Activated CD8-positive, alpha-beta T cell treated with anti-CD3 and anti-CD28 coated beads for 36 hours (primary cell): ENCODE measurements at regions of chr4 and their contacts with region 1.

Region 1: DNA sequence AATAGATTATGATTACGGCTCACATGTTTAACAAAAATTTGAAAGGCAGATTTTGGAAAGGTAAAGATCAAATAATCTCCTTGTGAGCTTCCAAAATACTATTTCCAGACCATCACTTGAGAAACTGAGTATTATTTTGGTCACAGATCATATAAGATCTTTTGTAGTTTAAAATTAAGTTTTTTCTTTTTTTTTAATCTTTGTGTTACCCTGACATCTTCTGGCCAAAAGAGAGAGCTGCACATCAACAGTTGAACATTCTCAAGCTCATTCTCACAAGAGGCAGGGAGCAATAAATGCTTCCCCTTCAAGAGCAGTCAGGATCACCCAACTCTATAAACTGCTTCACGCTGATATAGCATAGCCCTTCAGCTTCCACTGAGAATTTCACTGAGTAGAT is 15.9 kb downstream of the TMEM192 start:
- DNase-seq: no peak
- ATAC-seq: no peak
- H3K4me3 Mint-ChIP-seq: no peak overlapping the region
- H3K27ac Mint-ChIP-seq: no peak overlapping the region
- H3K4me1 Mint-ChIP-seq: no peaks in the 10 kb centered on the region
- H3K27me3 Mint-ChIP-seq: no peaks in the 10 kb centered on the region
- CTCF ChIP-seq: peak; percentile 50

Region 2: GRCh38 chr4:165112368-165113139 is 15.8 kb after region 1 on chr4 and contains the start of gene TMEM192:
- CTCF ChIA-PET with region 1: interaction called, 10 read pairs
- POLR2A ChIA-PET with region 1: no interaction called
- intact Hi-C with region 1: no loop called
- DNase-seq: peak; percentile 92
- ATAC-seq: peak; percentile 99
- H3K4me3 Mint-ChIP-seq: peak within 1 kb of the TSS; percentile 86
- H3K27ac Mint-ChIP-seq: peak within 1 kb of the TSS; percentile 94
- H3K4me1 Mint-ChIP-seq: peaks cover 15% of the 10 kb centered on the region
- H3K27me3 Mint-ChIP-seq: no peaks in the 10 kb centered on the region
- CTCF ChIP-seq: no peak
- total RNA-seq, gene TMEM192: 7.9 to 10.6 TPM

Region 3: GRCh38 chr4:165234766-165235165 is 138.0 kb after region 1 on chr4:
- CTCF ChIA-PET with region 1: no interaction called
- POLR2A ChIA-PET with region 1: no interaction called
- intact Hi-C with region 1: no loop called
- DNase-seq: no peak
- ATAC-seq: no peak
- H3K4me3 Mint-ChIP-seq: no peak overlapping the region
- H3K27ac Mint-ChIP-seq: no peak overlapping the region
- H3K4me1 Mint-ChIP-seq: peaks cover 29% of the 10 kb centered on the region
- H3K27me3 Mint-ChIP-seq: no peaks in the 10 kb centered on the region
- CTCF ChIP-seq: no peak